ENCODE measurements at regions of chr7 and their contacts with region 1.

Region 1: GRCh38 chr7:151759591-151760042 is 117.3 kb downstream of the PRKAG2 start:
- DNase-seq: peak; percentile 43 to 62 (median 55)
- H3K4me3 ChIP-seq: no peak overlapping the region
- H3K4me3 Mint-ChIP-seq: no peak overlapping the region
- H3K27ac ChIP-seq: peak overlapping the region in 1 of 2 donors; percentile 20
- H3K27ac Mint-ChIP-seq: peak overlapping the region in 6 of 7 donors; percentile 42 to 84 (median 66)
- H3K4me1 ChIP-seq: peaks cover 26 to 31% of the 10 kb centered on the region in 2 donors
- H3K4me1 Mint-ChIP-seq: peaks cover 54% of the 10 kb centered on the region
- H3K27me3 ChIP-seq: no peaks in the 10 kb centered on the region
- H3K27me3 Mint-ChIP-seq: peaks cover 0 to 7% (median 0%) of the 10 kb centered on the region in 3 donors
- CTCF ChIP-seq: peak; percentile 97

Region 2: GRCh38 chr7:151368136-151368571 is 391.5 kb before region 1 on chr7:
- intact Hi-C with region 1: loop called in 1 of 2 experiments (anchors 5 kb)
- DNase-seq: peak; percentile 60 to 68 (median 66)
- H3K4me3 ChIP-seq: no peak overlapping the region
- H3K4me3 Mint-ChIP-seq: no peak overlapping the region
- H3K27ac ChIP-seq: no peak overlapping the region
- H3K27ac Mint-ChIP-seq: no peak overlapping the region
- H3K4me1 ChIP-seq: no peaks in the 10 kb centered on the region
- H3K4me1 Mint-ChIP-seq: no peaks in the 10 kb centered on the region
- H3K27me3 ChIP-seq: no peaks in the 10 kb centered on the region
- H3K27me3 Mint-ChIP-seq: peaks cover 0 to 3% (median 2%) of the 10 kb centered on the region in 3 donors
- CTCF ChIP-seq: peak; percentile 97

Region 3: DNA sequence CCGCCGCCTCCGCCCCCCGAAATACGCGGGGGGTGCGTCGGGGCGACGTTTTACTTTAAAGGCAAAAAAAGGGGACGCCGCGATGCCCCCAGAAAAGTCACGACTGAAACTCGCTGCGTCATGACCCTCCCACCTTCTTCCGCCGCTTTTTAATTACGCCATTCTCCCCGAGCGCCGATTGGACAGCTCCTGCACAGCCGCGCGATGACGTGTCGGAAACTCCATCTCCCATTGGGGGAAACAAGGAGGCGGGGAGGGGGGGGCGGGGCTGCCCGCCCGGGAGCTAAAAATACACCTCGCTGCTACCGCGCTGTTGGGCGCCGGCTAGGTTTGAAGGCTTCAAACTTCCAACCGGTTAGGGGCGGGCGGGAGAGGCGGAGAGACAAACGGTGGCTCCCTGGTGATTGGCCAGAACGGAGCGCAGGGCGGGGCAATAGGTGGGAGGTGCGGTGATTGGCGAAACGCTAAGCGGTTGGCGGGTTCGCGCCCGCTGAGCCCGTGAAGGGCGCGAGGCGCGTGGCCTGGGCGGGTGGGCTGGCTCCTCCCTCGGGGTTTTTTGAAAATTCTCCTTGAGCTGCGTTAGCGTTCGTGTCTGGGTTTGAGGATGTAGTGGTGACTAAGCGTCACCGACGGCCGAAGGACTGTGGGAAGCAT is 239.7 kb before region 1 on chr7 and contains the start of gene RHEB:
- intact Hi-C with region 1: loop called in 1 of 2 experiments (anchors 10 kb)
- DNase-seq: peak; percentile 98 to 99 (median 99)
- H3K4me3 ChIP-seq: peak within 1 kb of the TSS; percentile 68 to 86 (median 75)
- H3K4me3 Mint-ChIP-seq: peak within 1 kb of the TSS; percentile 96 to 98
- H3K27ac ChIP-seq: peak within 1 kb of the TSS; percentile 74 to 88
- H3K27ac Mint-ChIP-seq: peak within 1 kb of the TSS; percentile 89 to 97 (median 96)
- H3K4me1 ChIP-seq: peaks cover 42 to 44% of the 10 kb centered on the region in 2 donors
- H3K4me1 Mint-ChIP-seq: peaks cover 39% of the 10 kb centered on the region
- H3K27me3 ChIP-seq: no peaks in the 10 kb centered on the region
- H3K27me3 Mint-ChIP-seq: peaks cover 0 to 2% (median 0%) of the 10 kb centered on the region in 3 donors
- CTCF ChIP-seq: no peak
- polyA plus RNA-seq, gene RHEB: 20.4 to 96.1 (median 95.8) TPM

Region 4: GRCh38 chr7:151570366-151570915 is 189.2 kb before region 1 on chr7:
- intact Hi-C with region 1: loop called in 1 of 2 experiments (anchors 5 kb)
- DNase-seq: no peak
- H3K4me3 ChIP-seq: no peak overlapping the region
- H3K4me3 Mint-ChIP-seq: no peak overlapping the region
- H3K27ac ChIP-seq: no peak overlapping the region
- H3K27ac Mint-ChIP-seq: no peak overlapping the region
- H3K4me1 ChIP-seq: no peaks in the 10 kb centered on the region
- H3K4me1 Mint-ChIP-seq: no peaks in the 10 kb centered on the region
- H3K27me3 ChIP-seq: no peaks in the 10 kb centered on the region
- H3K27me3 Mint-ChIP-seq: no peaks in the 10 kb centered on the region
- CTCF ChIP-seq: peak; percentile 60

Region 5: DNA sequence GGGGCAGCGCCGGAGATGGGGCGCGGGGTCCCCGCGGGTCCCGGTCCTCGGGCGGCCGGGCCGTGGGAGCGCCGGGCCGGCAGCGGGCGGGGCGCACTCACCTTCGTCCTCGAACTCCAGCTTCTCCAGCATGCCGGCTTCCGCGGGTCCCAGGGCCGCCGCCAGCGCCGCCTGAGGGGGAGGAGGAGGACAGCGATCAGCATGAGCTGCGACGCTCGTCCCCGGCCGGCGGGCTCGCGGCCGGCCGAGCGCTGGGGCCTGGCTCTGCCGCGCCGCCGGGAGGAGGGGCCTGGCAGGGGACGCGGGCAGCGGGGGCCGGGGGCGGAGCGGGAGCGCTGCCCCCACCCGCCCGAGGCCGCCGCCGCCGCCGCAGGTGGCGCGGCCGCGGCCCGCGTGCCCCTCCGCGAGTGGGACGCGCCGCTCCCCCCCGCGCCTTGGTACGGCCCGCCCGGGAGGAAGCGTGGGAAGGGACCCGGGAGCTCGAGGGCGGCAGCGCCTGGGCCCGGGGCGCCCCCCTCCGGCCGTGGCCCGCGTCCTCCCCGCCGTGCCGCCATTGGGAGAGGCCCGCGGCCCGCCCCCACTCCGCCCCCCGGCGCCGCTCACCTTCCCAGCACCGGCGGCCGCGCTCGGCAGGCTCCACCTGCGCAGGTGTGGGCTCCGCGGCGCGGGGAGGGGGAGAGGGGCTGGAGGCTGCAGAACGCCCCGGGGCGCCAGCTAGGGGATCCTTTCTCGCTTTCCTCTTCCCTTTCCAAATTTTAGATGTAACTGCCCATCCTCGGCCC is 127.5 kb before region 1 on chr7:
- intact Hi-C with region 1: loop called in 1 of 2 experiments (anchors 5 kb)
- DNase-seq: peak; percentile 68 to 84 (median 78)
- H3K4me3 ChIP-seq: peak overlapping the region; percentile 66 to 99 (median 82)
- H3K4me3 Mint-ChIP-seq: peak overlapping the region; percentile 92 to 98
- H3K27ac ChIP-seq: peak overlapping the region; percentile 92 to 94
- H3K27ac Mint-ChIP-seq: peak overlapping the region; percentile 95 to 100 (median 99)
- H3K4me1 ChIP-seq: peaks cover 21 to 25% of the 10 kb centered on the region in 2 donors
- H3K4me1 Mint-ChIP-seq: peaks cover 22% of the 10 kb centered on the region
- H3K27me3 ChIP-seq: no peaks in the 10 kb centered on the region
- H3K27me3 Mint-ChIP-seq: no peaks in the 10 kb centered on the region
- CTCF ChIP-seq: peak; percentile 55

Region 6: DNA sequence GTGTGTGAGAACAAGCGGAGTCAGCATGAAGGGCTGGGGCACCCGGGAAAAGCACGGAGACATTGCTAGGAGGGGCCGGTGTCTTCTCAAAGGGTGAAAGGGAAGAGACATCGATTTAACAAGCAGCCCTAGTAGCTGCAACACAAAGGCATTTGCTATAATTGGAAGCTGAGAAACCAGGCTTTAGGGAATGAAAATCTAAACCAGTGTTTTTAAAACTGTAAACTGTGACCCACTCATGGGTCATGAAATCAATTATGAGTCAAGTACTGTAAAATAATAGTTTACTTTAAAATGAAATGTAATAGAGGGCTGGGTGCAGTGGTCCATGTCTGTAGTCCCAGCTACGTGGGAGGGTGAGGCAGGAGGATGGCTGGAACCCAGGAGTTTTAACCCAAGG is 111.2 kb before region 1 on chr7:
- intact Hi-C with region 1: loop called in 1 of 2 experiments (anchors 10 kb)
- DNase-seq: no peak
- H3K4me3 ChIP-seq: no peak overlapping the region
- H3K4me3 Mint-ChIP-seq: no peak overlapping the region
- H3K27ac ChIP-seq: no peak overlapping the region
- H3K27ac Mint-ChIP-seq: no peak overlapping the region
- H3K4me1 ChIP-seq: peaks cover 19 to 23% of the 10 kb centered on the region in 2 donors
- H3K4me1 Mint-ChIP-seq: peaks cover 21% of the 10 kb centered on the region
- H3K27me3 ChIP-seq: no peaks in the 10 kb centered on the region
- H3K27me3 Mint-ChIP-seq: peaks cover 0 to 3% (median 0%) of the 10 kb centered on the region in 3 donors
- CTCF ChIP-seq: no peak

Measured in CD14-positive monocyte (primary cell).